ENCODE measurements at regions of chr2 and their contacts with region 1.

Region 1: DNA sequence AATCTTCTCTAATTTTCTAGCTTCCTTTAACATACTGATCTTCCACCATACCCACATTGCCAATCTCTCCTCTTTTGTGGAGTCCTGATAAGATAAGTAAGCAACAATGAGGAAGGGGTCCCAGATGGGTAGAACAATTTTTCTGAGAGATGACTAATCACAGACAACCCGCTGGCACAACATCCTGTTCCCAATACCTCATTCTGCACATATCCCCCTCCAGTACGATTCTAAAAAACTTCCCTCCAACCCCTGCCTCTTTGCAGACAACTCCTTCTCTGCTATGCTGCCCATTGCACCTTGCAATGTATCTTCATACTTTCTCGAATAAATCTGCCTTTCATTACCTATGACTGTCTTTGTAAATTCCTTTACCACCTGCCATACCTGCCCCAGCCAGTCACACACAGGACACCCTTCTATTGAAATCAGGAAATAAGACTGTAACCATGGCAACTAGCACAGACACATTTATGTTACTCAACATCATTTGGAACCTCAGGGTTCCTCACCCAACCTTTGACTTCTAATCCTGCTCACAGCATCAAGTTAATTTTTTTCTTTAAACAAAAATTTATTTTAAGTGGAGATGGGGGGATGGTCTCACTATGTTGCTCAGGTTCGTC is 7.4 kb upstream of the EXOC6B start:
- DNase-seq: no peak
- H3K4me3 Mint-ChIP-seq: no peak overlapping the region
- H3K27ac Mint-ChIP-seq: no peak overlapping the region
- H3K4me1 Mint-ChIP-seq: peaks cover 43% of the 10 kb centered on the region
- H3K27me3 Mint-ChIP-seq: peaks cover 14% of the 10 kb centered on the region

Region 2: DNA sequence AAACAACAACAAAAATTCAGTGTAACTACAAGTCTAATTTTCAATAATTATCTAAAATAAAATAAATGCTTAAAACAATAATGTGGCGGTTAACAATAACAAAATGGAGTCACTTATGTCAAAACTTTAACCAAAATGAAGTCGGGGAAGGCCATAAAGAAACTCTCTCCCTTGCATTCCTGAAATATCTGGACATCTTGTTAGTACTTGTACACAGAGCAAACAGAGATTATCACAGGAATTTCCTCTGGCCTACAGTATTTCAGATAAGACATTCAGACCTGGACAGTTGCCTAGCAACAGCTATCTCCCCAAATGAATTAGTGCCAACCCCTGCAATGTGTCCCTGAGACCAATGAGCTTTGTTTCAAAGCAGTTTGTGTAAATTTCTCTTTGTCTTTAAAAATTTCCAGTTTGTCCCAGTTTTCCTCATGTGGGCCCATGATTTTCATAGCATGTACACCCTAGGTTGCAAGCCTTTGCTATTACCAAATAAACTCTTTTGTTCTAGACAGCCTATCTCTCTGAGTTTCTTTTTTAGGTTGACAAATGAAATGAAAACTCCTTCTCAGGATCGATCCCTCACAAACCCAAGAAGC is 75.9 kb before region 1 on chr2:
- CTCF ChIA-PET with region 1: no interaction called
- POLR2A ChIA-PET with region 1: no interaction called
- DNase-seq: no peak
- H3K4me3 Mint-ChIP-seq: no peak overlapping the region
- H3K27ac Mint-ChIP-seq: no peak overlapping the region
- H3K4me1 Mint-ChIP-seq: no peaks in the 10 kb centered on the region
- H3K27me3 Mint-ChIP-seq: no peaks in the 10 kb centered on the region

Region 3: GRCh38 chr2:72846538-72847095 is 13.4 kb after region 1 on chr2:
- CTCF ChIA-PET with region 1: interaction called, 3 read pairs
- POLR2A ChIA-PET with region 1: interaction called, 10 read pairs
- DNase-seq: no peak
- H3K4me3 Mint-ChIP-seq: no peak overlapping the region
- H3K27ac Mint-ChIP-seq: no peak overlapping the region
- H3K4me1 Mint-ChIP-seq: peaks cover 2% of the 10 kb centered on the region
- H3K27me3 Mint-ChIP-seq: peaks cover 21% of the 10 kb centered on the region

Region 4: GRCh38 chr2:72862239-72862988 is 29.2 kb after region 1 on chr2:
- CTCF ChIA-PET with region 1: interaction called, 15 read pairs
- POLR2A ChIA-PET with region 1: interaction called, 3 read pairs
- DNase-seq: peak; percentile 88
- H3K4me3 Mint-ChIP-seq: peak overlapping the region; percentile 25
- H3K27ac Mint-ChIP-seq: no peak overlapping the region
- H3K4me1 Mint-ChIP-seq: peaks cover 14% of the 10 kb centered on the region
- H3K27me3 Mint-ChIP-seq: peaks cover 48% of the 10 kb centered on the region

Region 5: GRCh38 chr2:72893594-72894319 is 60.6 kb after region 1 on chr2:
- CTCF ChIA-PET with region 1: no interaction called
- POLR2A ChIA-PET with region 1: no interaction called
- DNase-seq: peak; percentile 59
- H3K4me3 Mint-ChIP-seq: no peak overlapping the region
- H3K27ac Mint-ChIP-seq: no peak overlapping the region
- H3K4me1 Mint-ChIP-seq: peaks cover 4% of the 10 kb centered on the region
- H3K27me3 Mint-ChIP-seq: peaks cover 44% of the 10 kb centered on the region

Measured in activated CD4-positive, alpha-beta memory T cell treated with anti-CD3 and anti-CD28 coated beads, Interleukin-2, amount 10 ng/mL, durations not matched to agents 7 days and 5 days (primary cell).